Left cardiac atrium (tissue), 4 donors: ENCODE measurements at regions of chr13 and their contacts with region 1.

Region 1: DNA sequence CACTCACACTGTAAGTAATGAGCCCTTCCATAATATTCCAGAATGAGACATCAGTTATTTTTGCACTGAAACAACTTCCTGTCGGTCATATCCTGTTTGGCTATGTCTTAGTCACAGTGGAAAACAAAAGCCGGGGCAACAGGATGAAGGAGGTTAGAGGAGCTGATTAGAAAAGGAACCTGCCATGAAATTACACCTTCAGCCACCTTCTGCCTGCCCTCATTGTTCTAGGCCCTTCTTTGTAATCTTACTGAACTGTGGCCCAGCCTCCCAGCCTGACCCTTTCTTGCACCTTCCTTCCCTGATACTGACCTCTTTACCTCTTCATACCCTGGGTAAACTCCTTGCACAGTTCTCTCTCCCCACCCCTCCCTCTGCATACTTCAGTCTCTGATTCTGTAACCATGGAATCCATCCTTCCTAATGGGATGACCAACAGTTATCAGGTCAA is 67.3 kb downstream of the DOCK9 start:
- DNase-seq: peak; percentile 37
- ATAC-seq: peak; percentile 76 to 85

Region 2: GRCh38 chr13:98959786-98960605 is 49.5 kb after region 1 on chr13:
- intact Hi-C with region 1: loop called in 1 of 2 experiments (anchors 10 kb)
- DNase-seq: no peak
- ATAC-seq: peak; percentile 46 to 67

Region 3: GRCh38 chr13:99018418-99019180 is 108.1 kb after region 1 on chr13:
- intact Hi-C with region 1: no loop called
- DNase-seq: no peak
- ATAC-seq: no peak